Gastrocnemius medialis (tissue), 4 donors: ENCODE measurements at regions of chr19 and their contacts with region 1.

Region 1: GRCh38 chr19:5048091-5048726 is 79.3 kb downstream of the KDM4B start:
- DNase-seq: peak; percentile 45 to 76
- ATAC-seq: peak; percentile 53 to 83
- H3K4me3 ChIP-seq: no peak overlapping the region
- H3K27ac ChIP-seq: peak overlapping the region in 1 of 4 donors; percentile 8
- H3K4me1 ChIP-seq: peaks cover 43 to 45% of the 10 kb centered on the region in 2 donors
- H3K27me3 ChIP-seq: no peaks in the 10 kb centered on the region
- CTCF ChIP-seq: peak; percentile 97 to 100 (median 98)
- POLR2A ChIP-seq: no peak

Region 2: DNA sequence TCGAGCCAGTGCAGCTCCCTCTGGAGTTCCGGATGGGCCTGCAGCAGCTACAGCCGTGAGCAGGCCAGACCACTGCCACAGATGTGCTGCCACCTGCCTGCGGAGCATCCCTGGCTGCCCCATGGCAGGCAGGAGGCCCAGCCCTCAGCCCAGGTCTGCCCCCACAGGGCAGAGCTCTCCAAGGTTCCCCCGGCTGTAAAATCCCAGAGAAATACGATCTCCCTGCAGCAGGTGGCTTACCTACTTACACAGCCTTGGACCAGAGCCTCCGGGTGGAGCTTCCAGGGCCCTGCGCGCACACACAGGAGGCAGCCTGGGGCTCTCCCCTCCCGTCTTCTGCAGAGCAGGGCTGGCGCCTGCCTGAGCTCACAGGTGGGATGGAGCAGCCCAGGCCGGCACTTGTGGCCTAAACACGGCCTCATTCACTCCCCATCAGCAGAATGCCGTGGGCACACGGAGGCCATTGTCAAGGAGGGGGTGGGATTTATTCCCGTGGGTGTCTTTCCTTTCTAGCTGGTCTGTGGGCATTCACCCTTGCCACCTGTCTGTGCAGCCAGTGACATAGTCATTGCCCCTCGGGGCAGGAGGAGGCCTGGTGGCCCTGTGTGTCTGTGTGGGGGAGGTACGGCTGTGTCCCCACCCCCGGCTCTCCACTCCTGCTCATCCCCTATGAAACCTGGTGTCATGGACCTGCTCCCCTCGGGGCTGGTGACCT is 38.7 kb after region 1 on chr19:
- in situ Hi-C with region 1: no loop called
- intact Hi-C with region 1: loop called (anchors 1 kb)
- DNase-seq: peak; percentile 56 to 63
- ATAC-seq: peak; percentile 46 to 63
- H3K4me3 ChIP-seq: no peak overlapping the region
- H3K27ac ChIP-seq: peak overlapping the region in 3 of 4 donors; percentile 17 to 58 (median 37)
- H3K4me1 ChIP-seq: peaks cover 13% of the 10 kb centered on the region in 2 donors
- H3K27me3 ChIP-seq: no peaks in the 10 kb centered on the region
- CTCF ChIP-seq: peak in 3 of 5 experiments; percentile 45 to 48 (median 47)
- POLR2A ChIP-seq: no peak

Region 3: DNA sequence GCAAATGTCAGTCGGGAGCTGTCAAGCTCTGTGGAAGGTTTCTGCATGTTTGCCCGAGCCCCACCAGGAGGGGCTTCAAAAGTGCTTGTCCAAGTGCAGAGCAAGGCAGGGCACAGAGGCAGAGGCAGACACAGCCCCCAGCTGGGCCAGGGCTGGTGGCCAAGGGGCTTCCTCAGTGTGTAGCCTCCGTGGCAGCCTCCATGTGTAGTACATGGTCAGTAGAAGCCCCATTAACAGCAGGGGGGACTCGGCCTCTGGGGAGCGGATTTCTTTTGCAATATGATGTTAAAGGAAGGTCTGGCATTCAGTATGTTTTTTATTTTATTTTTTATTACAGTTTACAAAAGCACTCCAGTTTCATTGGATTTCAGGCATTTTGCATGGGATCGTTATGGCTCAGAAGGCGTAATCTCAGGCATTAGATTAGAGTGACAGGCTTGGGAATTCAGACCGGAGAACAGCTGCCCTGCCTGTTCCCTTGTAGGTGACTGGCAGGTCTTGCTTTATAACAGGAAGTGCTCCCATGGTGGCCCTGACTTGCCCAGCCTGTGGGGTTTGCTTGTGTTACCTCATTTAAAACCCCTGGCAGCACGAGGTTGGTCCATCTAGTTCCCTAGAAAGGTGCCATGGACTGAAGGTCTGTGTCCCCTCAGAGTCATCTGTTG is 49.9 kb after region 1 on chr19:
- in situ Hi-C with region 1: no loop called
- intact Hi-C with region 1: no loop called
- DNase-seq: no peak
- ATAC-seq: no peak
- H3K4me3 ChIP-seq: no peak overlapping the region
- H3K27ac ChIP-seq: no peak overlapping the region
- H3K4me1 ChIP-seq: peaks cover 20 to 22% of the 10 kb centered on the region in 2 donors
- H3K27me3 ChIP-seq: no peaks in the 10 kb centered on the region
- CTCF ChIP-seq: no peak
- POLR2A ChIP-seq: no peak

Region 4: GRCh38 chr19:5128251-5128935 is 80.2 kb after region 1 on chr19:
- in situ Hi-C with region 1: no loop called
- intact Hi-C with region 1: loop called (anchors 10 kb)
- DNase-seq: peak in 1 of 2 donors; percentile 59
- ATAC-seq: peak; percentile 20 to 56
- H3K4me3 ChIP-seq: peak overlapping the region in 1 of 4 donors; percentile 20
- H3K27ac ChIP-seq: peak overlapping the region in 3 of 4 donors; percentile 42 to 71 (median 52)
- H3K4me1 ChIP-seq: peaks cover 14 to 27% of the 10 kb centered on the region in 2 donors
- H3K27me3 ChIP-seq: no peaks in the 10 kb centered on the region
- CTCF ChIP-seq: no peak
- POLR2A ChIP-seq: no peak

Region 5: GRCh38 chr19:5154129-5154798 is 106.1 kb after region 1 on chr19:
- in situ Hi-C with region 1: no loop called
- intact Hi-C with region 1: loop called (anchors 2 kb)
- DNase-seq: peak in 1 of 2 donors; percentile 43
- ATAC-seq: no peak
- H3K4me3 ChIP-seq: no peak overlapping the region
- H3K27ac ChIP-seq: no peak overlapping the region
- H3K4me1 ChIP-seq: peaks cover 12 to 30% of the 10 kb centered on the region in 2 donors
- H3K27me3 ChIP-seq: no peaks in the 10 kb centered on the region
- CTCF ChIP-seq: peak in 3 of 5 experiments; percentile 27 to 53 (median 53)
- POLR2A ChIP-seq: no peak